Heart right ventricle (tissue), 16 donors: ENCODE measurements at regions of chr1 and their contacts with region 1.

Region 1: DNA sequence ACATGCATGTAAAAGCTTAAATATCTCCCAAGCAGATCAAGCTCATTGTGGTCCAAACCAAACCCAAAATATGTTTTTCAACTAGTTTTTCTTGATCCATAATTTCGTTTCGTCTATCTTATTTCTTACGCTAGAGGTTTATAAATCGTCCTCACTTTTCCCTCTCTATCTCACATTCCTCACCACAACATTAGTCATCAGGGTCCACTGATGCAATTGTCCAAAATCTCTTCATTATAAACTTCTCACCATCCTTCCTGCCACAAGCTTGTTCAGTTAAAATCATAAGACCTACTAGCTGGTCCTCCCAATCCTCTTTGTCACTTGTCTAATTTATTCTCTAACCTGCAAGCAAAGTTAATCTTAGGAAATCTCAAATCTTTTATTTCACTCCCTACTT is 173.0 kb upstream of the PALMD start:
- DNase-seq: no peak
- ATAC-seq: no peak
- H3K4me3 ChIP-seq: no peak overlapping the region
- H3K27ac ChIP-seq: no peak overlapping the region
- H3K4me1 ChIP-seq: no peaks in the 10 kb centered on the region
- H3K27me3 ChIP-seq: no peaks in the 10 kb centered on the region
- CTCF ChIP-seq: no peak

Region 2: GRCh38 chr1:99438656-99439230 is 34.1 kb before region 1 on chr1:
- intact Hi-C with region 1: no loop called
- DNase-seq: no peak
- ATAC-seq: no peak
- H3K4me3 ChIP-seq: no peak overlapping the region
- H3K27ac ChIP-seq: no peak overlapping the region
- H3K4me1 ChIP-seq: peaks cover 0 to 20% (median 0%) of the 10 kb centered on the region in 9 donors
- H3K27me3 ChIP-seq: no peaks in the 10 kb centered on the region
- CTCF ChIP-seq: no peak

Region 3: DNA sequence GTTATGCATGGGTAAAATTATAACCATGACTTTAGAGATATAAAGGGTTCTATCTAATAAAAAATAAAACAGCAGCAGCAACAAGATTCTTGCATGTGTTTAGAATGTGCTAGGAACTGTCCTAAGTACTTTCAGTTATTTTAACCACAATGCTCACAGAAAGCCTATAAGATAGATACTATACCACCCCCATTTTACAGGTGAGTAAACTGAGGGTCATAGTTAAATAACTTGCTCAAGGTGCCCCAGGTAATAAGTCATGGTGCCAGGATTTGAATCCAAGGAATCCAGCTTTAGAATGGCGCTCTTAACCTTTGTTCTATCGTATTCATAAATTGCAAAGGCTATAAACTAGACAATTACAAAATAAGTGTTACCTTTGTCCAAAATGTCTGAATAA is 240.1 kb after region 1 on chr1:
- intact Hi-C with region 1: loop called in 1 of 10 experiments (anchors 5 kb)
- DNase-seq: no peak
- ATAC-seq: no peak
- H3K4me3 ChIP-seq: no peak overlapping the region
- H3K27ac ChIP-seq: no peak overlapping the region
- H3K4me1 ChIP-seq: no peaks in the 10 kb centered on the region
- H3K27me3 ChIP-seq: no peaks in the 10 kb centered on the region
- CTCF ChIP-seq: no peak